Heart right ventricle (tissue), 16 donors: ENCODE measurements at regions of chr6 and their contacts with region 1.

Region 1: DNA sequence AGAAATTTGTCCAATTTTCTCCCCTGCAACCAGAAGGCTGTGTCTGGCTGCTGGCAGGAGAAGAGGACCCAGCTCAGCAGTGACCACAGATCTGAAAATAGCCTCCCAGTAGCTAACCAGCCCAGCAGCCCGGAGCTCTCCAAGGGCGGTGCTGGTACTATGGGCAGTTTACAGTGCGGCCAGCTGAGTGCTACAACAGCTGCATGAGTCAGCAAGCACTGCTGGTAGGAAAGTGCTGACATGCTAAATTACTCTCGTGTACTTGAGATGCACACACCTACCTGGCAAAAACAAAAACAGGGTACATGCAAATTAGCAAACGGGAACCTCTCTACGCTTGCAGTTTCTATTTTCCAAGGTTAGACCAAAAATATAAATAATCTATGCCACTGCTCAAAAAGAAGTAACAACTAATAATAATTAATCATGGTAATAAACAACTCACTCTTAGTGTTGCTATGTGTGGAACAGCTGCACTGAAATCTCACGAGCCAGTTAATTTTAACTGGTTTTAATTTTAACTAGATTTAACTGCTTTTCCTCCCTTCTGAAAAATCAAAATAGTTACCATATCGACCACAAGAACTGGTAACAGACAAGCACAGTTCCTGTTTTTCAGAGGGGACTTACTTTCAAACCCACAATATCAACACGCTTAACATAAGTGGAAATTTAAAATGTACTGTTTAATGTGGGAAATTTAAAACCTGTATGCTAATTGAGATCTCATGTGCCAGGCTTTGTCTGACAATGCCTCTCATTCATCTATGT is 10.8 kb downstream of the BACH2 start:
- DNase-seq: peak; percentile 77 to 88
- ATAC-seq: peak; percentile 95 to 100 (median 98)
- H3K4me3 ChIP-seq: peak overlapping the region in 6 of 10 donors; percentile 30 to 46 (median 40)
- H3K27ac ChIP-seq: peak overlapping the region in 9 of 10 donors; percentile 3 to 76 (median 61)
- H3K4me1 ChIP-seq: peaks cover 3 to 33% (median 26%) of the 10 kb centered on the region in 9 donors
- H3K27me3 ChIP-seq: no peaks in the 10 kb centered on the region
- CTCF ChIP-seq: no peak

Region 2: DNA sequence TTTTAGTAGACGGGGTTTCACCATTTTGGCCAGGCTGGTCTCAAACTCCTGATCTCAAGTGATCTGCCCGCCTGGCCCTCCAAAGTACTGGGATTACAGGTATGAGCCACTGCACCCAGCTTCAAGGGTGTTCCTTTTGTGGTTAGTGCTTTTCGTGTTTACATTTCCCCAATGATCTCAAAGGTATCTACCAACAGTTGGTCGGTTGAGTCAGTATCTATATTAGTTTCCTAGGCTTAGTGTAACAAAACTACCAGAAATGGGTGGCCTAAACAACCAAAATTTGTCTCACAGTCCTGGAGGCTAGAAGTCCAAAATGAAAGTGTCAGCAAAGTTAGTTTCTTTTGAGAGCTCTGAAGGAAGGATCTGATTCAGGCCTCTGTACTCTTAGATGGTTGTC is 426.1 kb before region 1 on chr6:
- intact Hi-C with region 1: loop called in 1 of 10 experiments (anchors 5 kb)
- DNase-seq: no peak
- ATAC-seq: no peak
- H3K4me3 ChIP-seq: no peak overlapping the region
- H3K27ac ChIP-seq: no peak overlapping the region
- H3K4me1 ChIP-seq: no peaks in the 10 kb centered on the region
- H3K27me3 ChIP-seq: no peaks in the 10 kb centered on the region
- CTCF ChIP-seq: no peak

Region 3: DNA sequence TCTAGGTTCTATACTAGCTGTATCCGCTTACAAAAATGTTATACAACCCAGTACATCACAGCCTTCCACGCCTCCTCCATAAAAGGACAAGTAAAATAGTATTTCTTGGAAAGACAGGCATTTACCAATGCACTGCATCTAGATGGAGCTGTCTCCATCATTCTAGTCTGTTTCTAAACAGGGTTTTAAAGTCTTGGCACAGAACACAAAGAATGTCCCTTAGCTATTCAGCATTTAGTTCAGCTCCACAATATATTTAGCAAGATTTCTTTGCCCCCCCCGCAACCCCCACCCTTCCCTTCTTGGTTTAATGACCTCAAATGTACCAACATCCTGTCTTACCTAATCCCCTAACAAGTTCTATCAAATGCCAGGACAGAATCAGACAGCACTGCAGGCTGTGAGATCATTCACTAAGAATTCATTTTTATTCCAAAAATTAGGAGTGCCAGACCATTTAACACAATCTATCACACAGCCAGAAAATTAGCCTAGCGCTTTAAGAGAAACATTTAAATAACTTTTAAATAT is 187.7 kb before region 1 on chr6:
- intact Hi-C with region 1: loop called in 7 of 10 experiments (anchors 5 to 10 kb)
- DNase-seq: peak; percentile 17 to 39
- ATAC-seq: peak; percentile 86 to 93 (median 89)
- H3K4me3 ChIP-seq: no peak overlapping the region
- H3K27ac ChIP-seq: peak overlapping the region in 9 of 10 donors; percentile 37 to 85 (median 72)
- H3K4me1 ChIP-seq: peaks cover 2 to 45% (median 27%) of the 10 kb centered on the region in 9 donors
- H3K27me3 ChIP-seq: no peaks in the 10 kb centered on the region
- CTCF ChIP-seq: peak in 7 of 9 donors; percentile 25 to 63 (median 51)

Region 4: GRCh38 chr6:90103056-90103800 is 182.6 kb before region 1 on chr6:
- intact Hi-C with region 1: loop called in 7 of 10 experiments (anchors 5 to 10 kb)
- DNase-seq: no peak
- ATAC-seq: no peak
- H3K4me3 ChIP-seq: no peak overlapping the region
- H3K27ac ChIP-seq: no peak overlapping the region
- H3K4me1 ChIP-seq: peaks cover 0 to 40% (median 9%) of the 10 kb centered on the region in 9 donors
- H3K27me3 ChIP-seq: no peaks in the 10 kb centered on the region
- CTCF ChIP-seq: no peak

Region 5: DNA sequence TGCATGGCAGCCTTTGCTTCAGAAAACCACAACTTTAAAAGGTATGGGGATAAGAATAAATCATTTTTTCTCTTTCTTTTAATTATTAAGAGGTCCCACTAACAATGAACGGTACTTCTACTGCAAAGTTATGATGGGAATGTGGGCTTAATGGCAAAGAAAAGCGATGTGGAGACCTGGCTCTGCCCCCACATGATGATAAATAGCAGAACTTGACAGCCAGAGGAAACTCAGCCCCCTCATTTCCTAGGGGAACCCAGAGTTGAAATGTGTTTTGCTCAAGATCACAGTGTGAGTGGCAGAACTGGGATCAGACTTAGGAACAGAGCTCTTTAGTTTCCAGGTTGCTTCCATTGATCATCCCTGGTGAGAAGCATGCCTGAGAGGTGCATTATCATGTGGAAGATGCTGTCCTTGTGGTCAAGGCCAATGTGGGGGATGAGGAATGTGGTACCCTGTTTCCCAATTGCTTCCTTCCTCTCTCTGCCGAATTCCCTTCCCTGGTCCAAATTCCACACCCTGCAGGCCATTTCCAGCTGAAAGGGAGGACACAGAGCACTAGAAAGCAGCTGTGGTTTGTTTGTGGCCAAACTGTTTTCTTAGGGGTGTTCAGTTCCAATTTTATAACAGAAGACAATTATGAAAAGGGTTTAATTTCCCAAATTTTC is 55.1 kb before region 1 on chr6:
- intact Hi-C with region 1: loop called in 2 of 10 experiments (anchors 10 kb)
- DNase-seq: no peak
- ATAC-seq: peak in 7 of 8 donors; percentile 20 to 58 (median 57)
- H3K4me3 ChIP-seq: no peak overlapping the region
- H3K27ac ChIP-seq: peak overlapping the region in 5 of 10 donors; percentile 26 to 57 (median 42)
- H3K4me1 ChIP-seq: peaks cover 0 to 57% (median 38%) of the 10 kb centered on the region in 9 donors
- H3K27me3 ChIP-seq: no peaks in the 10 kb centered on the region
- CTCF ChIP-seq: no peak

Region 6: DNA sequence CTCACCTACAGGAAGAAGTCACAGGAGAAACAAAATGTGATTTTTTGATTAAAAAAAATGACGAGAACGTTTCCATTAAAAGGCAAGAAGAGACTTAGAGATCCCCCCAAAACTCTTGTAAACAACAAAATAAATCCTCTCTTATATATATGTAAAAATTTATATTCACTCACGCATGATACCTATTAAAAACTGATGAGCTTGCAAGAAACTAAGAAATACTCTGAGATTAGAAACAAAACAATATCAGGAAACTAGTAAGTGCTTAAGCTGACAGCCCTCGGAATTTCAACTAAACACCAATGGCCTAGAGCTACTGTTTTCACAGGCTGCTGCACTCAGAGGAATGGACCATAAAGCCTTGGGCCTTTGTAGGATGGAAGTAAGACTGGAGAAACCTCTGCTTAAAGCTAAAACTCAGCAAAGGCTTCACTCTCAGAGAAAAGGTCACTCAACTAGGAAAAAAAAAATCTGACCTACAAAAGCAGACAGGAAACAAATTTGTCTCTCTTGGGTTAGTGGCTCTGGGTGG is 238.0 kb after region 1 on chr6:
- intact Hi-C with region 1: no loop called
- DNase-seq: no peak
- ATAC-seq: no peak
- H3K4me3 ChIP-seq: no peak overlapping the region
- H3K27ac ChIP-seq: no peak overlapping the region
- H3K4me1 ChIP-seq: peaks cover 0 to 6% (median 0%) of the 10 kb centered on the region in 9 donors
- H3K27me3 ChIP-seq: no peaks in the 10 kb centered on the region
- CTCF ChIP-seq: no peak